H1 (cell line): ENCODE measurements at regions of chr4 and their contacts with region 1.

Region 1: DNA sequence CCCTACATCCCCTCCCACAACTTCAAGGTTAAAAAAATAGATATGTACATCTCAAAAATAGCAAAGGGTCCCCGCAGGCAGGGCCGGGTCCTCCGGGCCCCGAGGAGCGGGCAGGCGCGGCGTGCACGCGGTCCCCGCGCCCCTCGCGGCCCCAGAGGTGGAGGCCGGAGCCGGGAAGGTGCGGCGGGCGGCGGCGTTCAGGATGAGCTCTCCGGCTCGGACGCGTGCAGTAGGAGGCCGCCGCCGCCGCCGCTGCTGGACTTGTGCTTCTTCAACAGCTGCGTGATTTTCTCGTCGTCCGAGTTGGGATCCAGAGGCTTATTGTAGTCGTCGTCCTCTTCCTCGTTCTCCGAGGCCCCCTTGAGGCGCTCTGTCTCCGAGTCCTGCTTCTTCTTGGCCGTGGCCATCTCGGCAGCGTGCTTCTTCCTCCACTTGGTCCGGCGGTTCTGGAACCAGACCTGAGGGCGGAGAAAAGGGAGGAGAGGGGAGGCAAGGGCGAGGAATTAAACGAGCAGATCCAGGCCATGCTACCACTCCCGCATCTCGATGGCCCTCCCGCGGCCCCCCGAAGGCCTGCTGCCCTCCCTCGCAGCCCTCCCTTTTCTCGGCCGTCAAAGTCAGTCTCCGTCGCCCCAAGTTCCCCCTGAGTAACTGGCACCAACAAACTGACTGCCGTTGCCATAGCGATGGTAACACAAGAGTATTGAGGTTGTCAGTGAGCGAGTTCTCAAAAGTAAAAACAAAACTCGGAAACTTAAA is 5.8 kb downstream of the NKX6-1 start:
- DNase-seq: peak in 1 of 2 experiments; percentile 80
- H3K4me3 ChIP-seq: peak overlapping the region; percentile 15 to 59 (median 36); a peak in 5 of 8 replicates
- H3K27ac ChIP-seq: no peak overlapping the region
- H3K4me1 ChIP-seq: peaks cover 9 to 26% (median 19%) of the 10 kb centered on the region in 4 experiments
- H3K27me3 ChIP-seq: peaks cover 69 to 100% (median 92%) of the 10 kb centered on the region in 4 experiments
- CTCF ChIP-seq: no peak
- EP300 ChIP-seq: no peak
- POLR2A ChIP-seq: no peak
- RAD21 ChIP-seq: peak; percentile 12 to 31; a peak in 3 of 4 replicates

Region 2: DNA sequence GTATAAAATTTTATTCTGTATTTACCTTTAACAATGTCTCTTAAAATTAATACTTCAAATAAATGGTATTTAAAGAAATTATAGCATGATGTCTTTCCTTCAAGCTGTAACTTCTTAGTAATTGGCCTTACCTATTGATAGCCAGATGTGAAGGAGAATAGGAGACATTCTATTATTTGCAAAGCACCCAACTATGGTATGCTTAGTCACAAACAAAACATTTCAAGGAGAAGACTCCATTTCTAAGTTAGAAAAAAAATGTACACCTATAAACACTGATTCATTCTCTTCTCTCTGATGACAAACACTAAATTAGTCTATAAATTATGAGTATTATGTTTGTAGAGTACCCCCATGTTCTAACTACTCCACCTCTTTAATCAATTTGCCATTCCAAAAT is 60.6 kb before region 1 on chr4:
- CTCF ChIA-PET with region 1: no interaction called
- POLR2A ChIA-PET with region 1: no interaction called
- DNase-seq: no peak
- H3K4me3 ChIP-seq: no peak overlapping the region
- H3K27ac ChIP-seq: no peak overlapping the region
- H3K4me1 ChIP-seq: peaks cover 0 to 9% (median 0%) of the 10 kb centered on the region in 4 experiments; a peak in 1 of 7 replicates
- H3K27me3 ChIP-seq: no peaks in the 10 kb centered on the region
- CTCF ChIP-seq: no peak
- EP300 ChIP-seq: no peak
- POLR2A ChIP-seq: no peak
- RAD21 ChIP-seq: no peak

Region 3: GRCh38 chr4:84503495-84504437 is 10.5 kb after region 1 on chr4:
- CTCF ChIA-PET with region 1: interaction called, 17 read pairs
- POLR2A ChIA-PET with region 1: no interaction called
- DNase-seq: no peak
- H3K4me3 ChIP-seq: 0 out of 8 replicates have a peak overlapping the region, but pooled peaks of 1 of the 4 experiments have one; percentile 19
- H3K27ac ChIP-seq: no peak overlapping the region
- H3K4me1 ChIP-seq: peaks cover 3 to 19% (median 9%) of the 10 kb centered on the region in 4 experiments
- H3K27me3 ChIP-seq: peaks cover 40 to 52% (median 47%) of the 10 kb centered on the region in 4 experiments
- CTCF ChIP-seq: peak in 2 of 3 experiments; percentile 82; a peak in 3 of 4 replicates
- EP300 ChIP-seq: no peak
- POLR2A ChIP-seq: no peak
- RAD21 ChIP-seq: peak; percentile 92 to 93